Naive thymus-derived CD4-positive, alpha-beta T cell (primary cell): ENCODE measurements at regions of chrX and their contacts with region 1.

Region 1: DNA sequence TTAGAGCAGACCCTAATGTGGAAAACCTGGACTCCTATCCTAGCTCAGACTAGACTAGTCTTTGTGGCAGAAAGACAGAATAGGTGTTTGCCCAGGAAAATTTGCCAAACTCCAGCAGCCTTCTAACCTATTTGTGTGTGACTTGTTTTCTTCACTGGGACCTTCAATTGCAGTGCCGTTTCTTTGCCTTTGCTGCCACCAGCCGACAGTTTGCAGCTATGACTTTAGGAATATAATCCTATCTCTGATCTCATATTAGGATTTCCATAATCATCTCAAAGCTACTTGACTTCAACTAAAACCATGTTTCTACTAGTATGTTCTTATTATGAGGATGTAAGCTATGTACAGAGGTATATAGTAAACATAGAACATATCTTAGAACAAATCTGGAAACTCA is 60.2 kb upstream of the PGAM4 start:
- DNase-seq: peak in 1 of 9 donors; percentile 8
- ATAC-seq: no peak
- H3K4me3 ChIP-seq: no peak overlapping the region
- H3K4me3 Mint-ChIP-seq: no peak overlapping the region
- H3K27ac ChIP-seq: no peak overlapping the region
- H3K27ac Mint-ChIP-seq: no peak overlapping the region
- H3K4me1 ChIP-seq: no peaks in the 10 kb centered on the region
- H3K4me1 Mint-ChIP-seq: peaks cover 0 to 3% (median 2%) of the 10 kb centered on the region in 7 donors
- H3K27me3 ChIP-seq: no peaks in the 10 kb centered on the region
- H3K27me3 Mint-ChIP-seq: no peaks in the 10 kb centered on the region

Region 2: DNA sequence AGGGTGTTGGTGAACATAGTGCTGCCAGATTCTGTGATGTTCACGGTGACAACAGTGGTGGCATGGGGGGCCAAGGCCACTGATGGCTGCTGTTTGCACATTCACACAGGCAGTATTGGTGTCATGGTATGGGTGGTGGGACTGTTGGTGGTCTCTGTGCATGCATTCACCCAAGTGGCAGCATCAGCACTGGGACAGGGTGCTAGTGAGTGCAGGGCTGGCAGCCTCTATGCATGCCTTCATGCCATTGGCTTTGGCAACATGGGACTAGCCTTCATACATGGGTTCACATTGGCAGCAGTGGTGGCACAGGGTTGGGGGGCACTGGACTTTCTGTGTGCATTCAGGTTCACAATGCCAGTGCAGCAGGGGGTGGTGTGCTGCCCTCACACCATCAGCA is 1072.2 kb before region 1 on chrX:
- CTCF ChIA-PET with region 1: no interaction called
- POLR2A ChIA-PET with region 1: no interaction called
- intact Hi-C with region 1: no loop called
- DNase-seq: no peak
- ATAC-seq: no peak
- H3K4me3 ChIP-seq: no peak overlapping the region
- H3K4me3 Mint-ChIP-seq: no peak overlapping the region
- H3K27ac ChIP-seq: no peak overlapping the region
- H3K27ac Mint-ChIP-seq: no peak overlapping the region
- H3K4me1 ChIP-seq: no peaks in the 10 kb centered on the region
- H3K4me1 Mint-ChIP-seq: no peaks in the 10 kb centered on the region
- H3K27me3 ChIP-seq: no peaks in the 10 kb centered on the region
- H3K27me3 Mint-ChIP-seq: no peaks in the 10 kb centered on the region

Region 3: DNA sequence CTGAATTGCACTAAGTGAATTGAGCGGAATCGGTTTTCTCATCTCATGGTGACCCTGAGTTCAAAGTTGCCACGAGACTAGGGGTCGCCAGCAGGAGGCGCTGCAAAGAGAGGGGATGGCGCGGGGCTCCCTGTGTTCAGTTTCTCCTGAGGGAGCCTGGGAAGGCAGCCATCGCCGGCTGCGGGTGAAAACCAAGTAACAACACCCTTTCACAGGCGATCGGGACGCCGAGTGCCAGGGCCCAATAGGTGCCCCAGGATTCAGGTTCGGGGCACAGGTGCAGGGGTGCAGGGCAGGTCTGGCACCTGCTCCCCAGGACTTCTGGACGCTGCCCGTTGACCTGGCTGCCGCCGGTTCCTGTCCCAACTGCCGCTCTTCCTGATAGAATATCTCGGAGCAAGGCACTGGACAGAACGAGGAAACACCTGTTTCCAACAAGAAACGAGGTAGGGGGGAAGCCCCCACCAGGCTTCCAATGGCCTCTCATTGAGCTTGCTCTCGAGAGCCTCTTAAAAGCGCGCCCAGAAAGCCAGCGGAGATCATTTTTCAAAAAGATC is 583.6 kb before region 1 on chrX:
- CTCF ChIA-PET with region 1: no interaction called
- POLR2A ChIA-PET with region 1: no interaction called
- intact Hi-C with region 1: loop called in 1 of 2 experiments (anchors 10 kb)
- DNase-seq: no peak
- ATAC-seq: no peak
- H3K4me3 ChIP-seq: peak overlapping the region; percentile 33
- H3K4me3 Mint-ChIP-seq: peak overlapping the region; percentile 72 to 84 (median 79)
- H3K27ac ChIP-seq: no peak overlapping the region
- H3K27ac Mint-ChIP-seq: no peak overlapping the region
- H3K4me1 ChIP-seq: peaks cover 5 to 6% of the 10 kb centered on the region in 2 donors
- H3K4me1 Mint-ChIP-seq: peaks cover 0 to 19% (median 13%) of the 10 kb centered on the region in 7 donors
- H3K27me3 ChIP-seq: no peaks in the 10 kb centered on the region
- H3K27me3 Mint-ChIP-seq: peaks cover 17 to 38% (median 34%) of the 10 kb centered on the region in 5 donors

Region 4: DNA sequence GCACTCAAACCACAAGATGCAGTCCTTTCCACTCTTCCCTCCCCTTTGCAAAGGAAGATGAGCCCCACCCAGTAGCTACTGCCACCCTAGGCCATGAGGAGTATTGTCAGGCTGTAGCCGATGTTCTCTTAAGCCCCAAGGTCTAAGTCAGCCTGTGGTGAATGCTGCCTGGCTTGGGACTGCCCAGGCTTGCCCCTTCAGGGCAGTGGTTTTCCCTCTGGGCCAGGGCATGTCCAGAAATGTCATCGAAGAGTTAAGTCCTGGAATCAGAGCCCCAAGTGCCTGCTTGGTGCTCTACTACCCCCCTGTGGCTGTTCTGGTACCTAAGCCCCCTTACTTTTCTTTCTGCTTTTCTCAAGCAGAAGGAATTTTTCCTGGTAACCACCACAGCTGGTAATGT is 62.6 kb after region 1 on chrX:
- CTCF ChIA-PET with region 1: no interaction called
- POLR2A ChIA-PET with region 1: no interaction called
- intact Hi-C with region 1: no loop called
- DNase-seq: peak in 1 of 9 donors; percentile 13
- ATAC-seq: peak; percentile 59
- H3K4me3 ChIP-seq: no peak overlapping the region
- H3K4me3 Mint-ChIP-seq: no peak overlapping the region
- H3K27ac ChIP-seq: no peak overlapping the region
- H3K27ac Mint-ChIP-seq: peak overlapping the region in 2 of 9 donors; percentile 4 to 13
- H3K4me1 ChIP-seq: no peaks in the 10 kb centered on the region
- H3K4me1 Mint-ChIP-seq: peaks cover 0 to 15% (median 0%) of the 10 kb centered on the region in 7 donors
- H3K27me3 ChIP-seq: no peaks in the 10 kb centered on the region
- H3K27me3 Mint-ChIP-seq: peaks cover 0 to 14% (median 0%) of the 10 kb centered on the region in 5 donors